PC-3 (cell line): ENCODE measurements at regions of chr20 and their contacts with region 1.

Region 1: DNA sequence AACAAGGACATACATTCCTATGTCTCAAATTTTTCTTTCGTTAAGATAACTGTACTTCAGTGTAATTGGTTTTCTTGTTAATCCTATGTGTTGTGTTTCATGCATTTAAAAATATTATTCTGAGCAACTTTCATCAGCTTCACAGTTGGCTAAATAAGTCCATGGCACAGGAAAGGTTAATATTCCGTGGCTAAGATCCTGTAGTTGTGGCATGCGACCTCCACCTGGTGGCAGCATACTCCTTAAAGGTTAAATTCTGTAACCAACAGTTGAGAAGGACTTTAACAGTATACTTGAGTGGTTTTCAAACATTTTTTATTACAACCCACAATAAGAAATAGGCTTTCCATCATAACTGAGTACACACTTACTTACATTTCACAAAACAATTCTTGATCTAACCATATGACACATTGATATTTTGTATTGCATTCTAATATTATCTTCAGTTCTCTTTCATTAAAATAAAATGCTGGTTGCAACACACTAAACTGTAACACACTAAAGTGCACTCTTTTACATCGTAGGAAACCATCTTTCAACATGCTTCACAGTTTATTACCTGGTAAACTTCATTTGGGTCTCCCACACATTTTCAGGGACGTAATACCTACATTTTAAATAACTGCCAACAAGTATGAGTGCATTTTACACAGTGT is 118.3 kb downstream of the SLX4IP start:
- DNase-seq: peak; percentile 91
- ATAC-seq: peak; percentile 64
- H3K4me3 ChIP-seq: no peak overlapping the region
- H3K27ac ChIP-seq: peak overlapping the region; percentile 96
- H3K4me1 ChIP-seq: peaks cover 50% of the 10 kb centered on the region
- H3K27me3 ChIP-seq: no peaks in the 10 kb centered on the region
- CTCF ChIP-seq: peak; percentile 96

Region 2: DNA sequence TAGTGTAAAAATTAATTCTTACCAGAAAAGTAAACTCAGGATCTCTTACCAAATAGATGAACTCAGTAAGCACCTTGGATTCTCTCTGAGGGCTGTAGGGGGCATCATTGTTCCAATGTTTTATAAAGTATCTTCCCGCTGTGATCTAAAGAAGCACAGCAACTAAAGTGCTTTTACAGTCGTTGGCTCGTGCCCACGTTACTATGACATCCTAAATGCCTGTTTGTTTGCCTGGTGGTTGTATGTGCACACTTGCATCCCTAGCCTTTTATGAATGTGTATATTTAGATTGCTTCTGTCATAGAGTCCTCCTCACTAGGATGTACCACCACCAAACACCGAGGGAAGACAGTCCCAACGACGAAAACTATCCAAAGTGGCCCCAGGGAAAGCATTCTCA is 83.9 kb before region 1 on chr20:
- CTCF ChIA-PET with region 1: no interaction called
- POLR2A ChIA-PET with region 1: no interaction called
- intact Hi-C with region 1: loop called (anchors 1 kb)
- DNase-seq: peak; percentile 87
- ATAC-seq: peak; percentile 79
- H3K4me3 ChIP-seq: no peak overlapping the region
- H3K27ac ChIP-seq: peak overlapping the region; percentile 23
- H3K4me1 ChIP-seq: peaks cover 18% of the 10 kb centered on the region
- H3K27me3 ChIP-seq: no peaks in the 10 kb centered on the region
- CTCF ChIP-seq: peak; percentile 80

Region 3: DNA sequence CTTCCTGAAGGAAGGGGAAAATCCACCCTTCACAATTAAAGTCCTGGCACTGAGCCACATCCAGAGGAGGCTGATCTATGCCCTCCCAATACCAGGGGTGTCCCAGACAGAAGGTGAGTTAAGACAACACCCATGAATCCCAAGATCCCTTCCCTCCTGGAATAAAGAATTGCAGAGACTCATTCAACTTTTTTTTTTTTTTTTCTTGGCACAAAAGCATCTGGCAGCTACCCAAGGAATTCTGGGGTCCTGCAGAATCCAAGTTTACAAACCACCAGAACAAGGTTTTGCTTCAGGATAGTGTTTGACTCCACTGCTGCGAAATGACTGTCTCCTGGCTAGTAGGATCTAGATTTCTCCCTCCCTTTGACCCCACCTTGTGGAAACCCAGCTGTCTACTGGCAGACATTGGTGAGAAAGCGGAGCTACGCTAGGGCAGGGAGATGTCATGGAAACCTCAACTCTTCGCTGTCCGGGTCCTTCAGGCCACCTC is 82.9 kb after region 1 on chr20:
- CTCF ChIA-PET with region 1: no interaction called
- POLR2A ChIA-PET with region 1: no interaction called
- intact Hi-C with region 1: loop called (anchors 5 kb)
- DNase-seq: peak; percentile 36
- ATAC-seq: peak; percentile 18
- H3K4me3 ChIP-seq: no peak overlapping the region
- H3K27ac ChIP-seq: peak overlapping the region; percentile 53
- H3K4me1 ChIP-seq: peaks cover 7% of the 10 kb centered on the region; the same call in 1 of the 2 replicates
- H3K27me3 ChIP-seq: no peaks in the 10 kb centered on the region
- CTCF ChIP-seq: peak; percentile 19; the same call in 1 of the 2 replicates

Region 4: GRCh38 chr20:10654630-10655029 is 101.2 kb after region 1 on chr20:
- CTCF ChIA-PET with region 1: no interaction called
- POLR2A ChIA-PET with region 1: no interaction called
- intact Hi-C with region 1: loop called (anchors 5 kb)
- DNase-seq: no peak
- ATAC-seq: peak; percentile 23
- H3K4me3 ChIP-seq: no peak overlapping the region
- H3K27ac ChIP-seq: peak overlapping the region; percentile 66
- H3K4me1 ChIP-seq: peaks cover 17% of the 10 kb centered on the region
- H3K27me3 ChIP-seq: no peaks in the 10 kb centered on the region
- CTCF ChIP-seq: no peak

Region 5: GRCh38 chr20:10752206-10752605 is 198.8 kb after region 1 on chr20:
- CTCF ChIA-PET with region 1: no interaction called
- POLR2A ChIA-PET with region 1: interaction called, 16 read pairs
- intact Hi-C with region 1: no loop called
- DNase-seq: no peak
- ATAC-seq: no peak
- H3K4me3 ChIP-seq: no peak overlapping the region
- H3K27ac ChIP-seq: no peak overlapping the region
- H3K4me1 ChIP-seq: 0 out of 2 replicates have a peak, but pooled peaks cover 1% of the 10 kb centered on the region
- H3K27me3 ChIP-seq: no peaks in the 10 kb centered on the region
- CTCF ChIP-seq: no peak

Region 6: DNA sequence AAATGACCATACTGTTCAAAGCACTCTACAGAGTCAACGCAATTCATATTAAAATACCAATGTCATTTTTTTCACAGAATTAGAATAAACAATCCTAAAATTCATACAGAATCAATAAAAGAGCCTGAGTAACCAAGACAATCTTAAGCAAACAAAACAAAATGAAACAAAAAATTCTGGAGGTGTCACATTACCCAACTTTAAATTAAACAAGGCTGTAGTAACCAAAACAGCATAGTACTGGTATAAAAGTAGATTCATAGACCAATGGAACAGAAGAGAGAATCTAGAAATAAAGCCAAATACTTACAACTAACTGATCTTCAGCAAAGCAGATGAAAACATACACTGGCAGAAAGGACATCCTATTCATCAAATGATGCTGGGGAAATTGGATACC is 467.3 kb after region 1 on chr20:
- CTCF ChIA-PET with region 1: no interaction called
- POLR2A ChIA-PET with region 1: no interaction called
- intact Hi-C with region 1: loop called (anchors 10 kb)
- DNase-seq: peak; percentile 49
- ATAC-seq: peak; percentile 85
- H3K4me3 ChIP-seq: no peak overlapping the region
- H3K27ac ChIP-seq: 0 out of 2 replicates have a peak overlapping the region, but pooled peaks have one; percentile 4
- H3K4me1 ChIP-seq: peaks cover 12% of the 10 kb centered on the region; the same call in 1 of the 2 replicates
- H3K27me3 ChIP-seq: no peaks in the 10 kb centered on the region
- CTCF ChIP-seq: no peak

Region 7: DNA sequence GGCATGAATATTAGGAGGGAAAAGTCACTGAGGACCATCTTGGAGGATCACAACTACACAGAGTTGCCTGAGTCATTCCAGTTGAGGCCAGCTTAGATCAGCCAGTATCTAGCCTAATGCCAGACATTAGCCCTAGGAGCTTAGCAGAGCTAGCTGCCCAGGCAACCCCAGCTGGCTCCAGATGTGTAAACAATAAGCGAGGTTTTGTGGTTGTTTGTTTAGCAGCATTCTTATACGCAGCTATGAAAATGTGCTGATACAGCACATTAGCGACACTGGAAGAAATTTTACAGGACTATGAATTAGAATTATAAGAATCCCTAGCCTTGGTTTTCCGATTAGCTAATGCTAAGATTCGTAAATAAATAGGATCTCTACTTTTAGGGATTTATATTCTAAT is 1423.5 kb after region 1 on chr20:
- CTCF ChIA-PET with region 1: no interaction called
- POLR2A ChIA-PET with region 1: no interaction called
- intact Hi-C with region 1: no loop called
- DNase-seq: peak; percentile 20
- ATAC-seq: no peak
- H3K4me3 ChIP-seq: no peak overlapping the region
- H3K27ac ChIP-seq: no peak overlapping the region
- H3K4me1 ChIP-seq: no peaks in the 10 kb centered on the region
- H3K27me3 ChIP-seq: peaks cover 62% of the 10 kb centered on the region
- CTCF ChIP-seq: no peak